ENCODE measurements at regions of chr10 and their contacts with region 1.

Region 1: GRCh38 chr10:68901104-68901927 is at the start of gene DDX50:
- DNase-seq: peak; percentile 88 to 99 (median 95)
- ATAC-seq: peak; percentile 95
- H3K4me3 ChIP-seq: peak within 1 kb of the TSS; percentile 87 to 90
- H3K4me3 Mint-ChIP-seq: peak within 1 kb of the TSS; percentile 98
- H3K27ac ChIP-seq: peak within 1 kb of the TSS; percentile 95 to 97
- H3K27ac Mint-ChIP-seq: peak within 1 kb of the TSS; percentile 99
- H3K4me1 ChIP-seq: peaks cover 24% of the 10 kb centered on the region
- H3K4me1 Mint-ChIP-seq: peaks cover 41% of the 10 kb centered on the region
- H3K27me3 ChIP-seq: no peaks in the 10 kb centered on the region
- H3K27me3 Mint-ChIP-seq: no peaks in the 10 kb centered on the region
- CTCF ChIP-seq: no peak
- total RNA-seq, gene DDX50: 49.4 to 56.3 TPM

Region 2: DNA sequence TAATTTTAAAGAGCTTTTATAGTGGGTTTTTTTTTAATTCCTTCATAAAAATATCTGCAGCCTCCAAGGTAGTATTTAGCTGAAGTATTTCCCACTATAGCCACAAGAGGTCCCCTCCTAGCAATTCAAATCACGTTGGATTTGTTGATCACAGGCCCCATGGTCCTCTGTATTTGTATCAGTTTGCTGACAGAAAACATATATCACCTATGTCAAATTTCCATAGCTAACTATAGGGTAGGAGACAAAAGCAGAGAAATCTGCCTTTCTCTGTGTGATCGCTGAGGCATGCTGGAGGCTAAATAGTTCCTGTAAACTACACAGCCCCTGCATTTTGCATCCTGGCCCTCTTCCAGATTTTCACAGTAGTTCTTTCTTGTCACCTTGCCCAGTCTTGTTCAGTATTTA is 1203.6 kb before region 1 on chr10:
- CTCF ChIA-PET with region 1: no interaction called
- POLR2A ChIA-PET with region 1: no interaction called
- intact Hi-C with region 1: loop called in 1 of 2 experiments (anchors 5 kb)
- DNase-seq: peak in 5 of 9 experiments; percentile 11 to 71 (median 21)
- ATAC-seq: peak; percentile 87
- H3K4me3 ChIP-seq: no peak overlapping the region
- H3K4me3 Mint-ChIP-seq: no peak overlapping the region
- H3K27ac ChIP-seq: no peak overlapping the region
- H3K27ac Mint-ChIP-seq: no peak overlapping the region
- H3K4me1 ChIP-seq: no peaks in the 10 kb centered on the region
- H3K4me1 Mint-ChIP-seq: peaks cover 4% of the 10 kb centered on the region
- H3K27me3 ChIP-seq: no peaks in the 10 kb centered on the region
- H3K27me3 Mint-ChIP-seq: peaks cover 33% of the 10 kb centered on the region
- CTCF ChIP-seq: peak; percentile 72

Region 3: GRCh38 chr10:67849331-67850011 is 1051.8 kb before region 1 on chr10:
- CTCF ChIA-PET with region 1: no interaction called
- POLR2A ChIA-PET with region 1: no interaction called
- intact Hi-C with region 1: loop called (anchors 5 to 10 kb)
- DNase-seq: peak; percentile 86 to 96 (median 93)
- ATAC-seq: peak; percentile 99
- H3K4me3 ChIP-seq: peak overlapping the region; percentile 61 to 97
- H3K4me3 Mint-ChIP-seq: peak overlapping the region; percentile 94
- H3K27ac ChIP-seq: peak overlapping the region; percentile 64 to 96
- H3K27ac Mint-ChIP-seq: peak overlapping the region; percentile 96
- H3K4me1 ChIP-seq: peaks cover 5% of the 10 kb centered on the region
- H3K4me1 Mint-ChIP-seq: peaks cover 10% of the 10 kb centered on the region
- H3K27me3 ChIP-seq: no peaks in the 10 kb centered on the region
- H3K27me3 Mint-ChIP-seq: no peaks in the 10 kb centered on the region
- CTCF ChIP-seq: no peak

Region 4: DNA sequence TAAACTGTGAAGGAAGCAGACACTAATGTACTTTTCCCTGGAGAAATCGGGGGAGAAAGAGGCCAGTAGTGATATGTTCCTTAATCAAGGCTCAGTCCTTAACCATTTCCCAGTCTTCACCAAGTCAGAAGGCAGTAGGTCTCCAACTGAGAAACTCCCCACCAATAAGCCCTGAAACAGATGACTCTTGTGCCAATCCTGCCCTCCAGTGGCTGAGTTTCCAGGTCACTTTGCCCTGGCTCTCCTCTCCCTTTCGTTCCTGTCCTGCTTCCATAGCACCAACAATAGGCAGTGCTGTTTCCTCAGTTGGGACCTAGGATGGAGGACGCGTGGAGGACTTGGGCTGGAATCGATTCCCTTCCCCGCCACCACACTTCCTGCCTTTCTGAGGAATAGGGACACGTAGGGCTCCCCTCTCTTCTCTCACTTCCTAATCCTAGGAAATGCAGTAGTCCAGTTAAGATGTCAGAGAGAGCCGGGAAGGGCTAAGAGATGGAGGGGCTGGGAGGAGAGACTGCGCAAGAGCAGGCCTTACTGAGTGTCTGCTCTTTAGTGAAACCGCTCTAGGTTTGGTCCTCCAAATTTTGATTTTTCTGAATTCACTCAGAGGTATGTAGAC is 692.8 kb before region 1 on chr10:
- CTCF ChIA-PET with region 1: interaction called, 6 read pairs
- POLR2A ChIA-PET with region 1: no interaction called
- intact Hi-C with region 1: loop called in 1 of 2 experiments (anchors 10 kb)
- DNase-seq: peak in 2 of 9 experiments; percentile 6 to 20
- ATAC-seq: no peak
- H3K4me3 ChIP-seq: no peak overlapping the region
- H3K4me3 Mint-ChIP-seq: no peak overlapping the region
- H3K27ac ChIP-seq: no peak overlapping the region
- H3K27ac Mint-ChIP-seq: no peak overlapping the region
- H3K4me1 ChIP-seq: no peaks in the 10 kb centered on the region
- H3K4me1 Mint-ChIP-seq: no peaks in the 10 kb centered on the region
- H3K27me3 ChIP-seq: no peaks in the 10 kb centered on the region
- H3K27me3 Mint-ChIP-seq: peaks cover 22% of the 10 kb centered on the region
- CTCF ChIP-seq: no peak

Region 5: GRCh38 chr10:68526626-68527307 is 374.5 kb before region 1 on chr10:
- CTCF ChIA-PET with region 1: no interaction called
- POLR2A ChIA-PET with region 1: no interaction called
- intact Hi-C with region 1: loop called (anchors 2 to 5 kb)
- DNase-seq: no peak
- ATAC-seq: no peak
- H3K4me3 ChIP-seq: peak overlapping the region; percentile 74 to 96
- H3K4me3 Mint-ChIP-seq: peak overlapping the region; percentile 92
- H3K27ac ChIP-seq: peak overlapping the region; percentile 91
- H3K27ac Mint-ChIP-seq: peak overlapping the region; percentile 96
- H3K4me1 ChIP-seq: peaks cover 6% of the 10 kb centered on the region
- H3K4me1 Mint-ChIP-seq: peaks cover 8% of the 10 kb centered on the region
- H3K27me3 ChIP-seq: no peaks in the 10 kb centered on the region
- H3K27me3 Mint-ChIP-seq: no peaks in the 10 kb centered on the region
- CTCF ChIP-seq: no peak

Region 6: GRCh38 chr10:68826764-68827591 is 74.3 kb before region 1 on chr10 and contains the start of gene STOX1:
- CTCF ChIA-PET with region 1: interaction called, 3 read pairs
- POLR2A ChIA-PET with region 1: interaction called, 3 read pairs
- intact Hi-C with region 1: loop called (anchors 2 kb)
- DNase-seq: peak; percentile 14 to 72 (median 42)
- ATAC-seq: peak; percentile 67
- H3K4me3 ChIP-seq: peak within 1 kb of the TSS; percentile 58 to 76
- H3K4me3 Mint-ChIP-seq: peak within 1 kb of the TSS; percentile 79
- H3K27ac ChIP-seq: peak within 1 kb of the TSS in 1 of 2 experiments; percentile 27
- H3K27ac Mint-ChIP-seq: no peak within 1 kb of the TSS
- H3K4me1 ChIP-seq: peaks cover 21% of the 10 kb centered on the region
- H3K4me1 Mint-ChIP-seq: peaks cover 23% of the 10 kb centered on the region
- H3K27me3 ChIP-seq: peaks cover 0 to 2% of the 10 kb centered on the region in 2 experiments
- H3K27me3 Mint-ChIP-seq: peaks cover 3% of the 10 kb centered on the region
- CTCF ChIP-seq: no peak
- total RNA-seq, gene STOX1: 0.11 TPM in 1 of 2 experiments, not detected in the other

Region 7: GRCh38 chr10:69123747-69124562 is 222.6 kb after region 1 on chr10 and contains the start of gene VPS26A:
- CTCF ChIA-PET with region 1: no interaction called
- POLR2A ChIA-PET with region 1: interaction called, 4 read pairs
- intact Hi-C with region 1: loop called (anchors 1 to 2 kb)
- DNase-seq: peak; percentile 95 to 99 (median 98)
- ATAC-seq: peak; percentile 97
- H3K4me3 ChIP-seq: peak within 1 kb of the TSS; percentile 88 to 90
- H3K4me3 Mint-ChIP-seq: peak within 1 kb of the TSS; percentile 94
- H3K27ac ChIP-seq: peak within 1 kb of the TSS; percentile 94
- H3K27ac Mint-ChIP-seq: peak within 1 kb of the TSS; percentile 97
- H3K4me1 ChIP-seq: peaks cover 27% of the 10 kb centered on the region
- H3K4me1 Mint-ChIP-seq: peaks cover 30% of the 10 kb centered on the region
- H3K27me3 ChIP-seq: no peaks in the 10 kb centered on the region
- H3K27me3 Mint-ChIP-seq: no peaks in the 10 kb centered on the region
- CTCF ChIP-seq: peak; percentile 54
- total RNA-seq, gene VPS26A: 48.6 to 50.3 TPM